Transverse colon (tissue), 4 donors: ENCODE measurements at regions of chr2 and their contacts with region 1.

Region 1: GRCh38 chr2:69436938-69437750 is at the start of gene NFU1:
- DNase-seq: peak; percentile 91
- H3K4me3 ChIP-seq: peak within 1 kb of the TSS; percentile 59 to 93 (median 73)
- H3K27ac ChIP-seq: peak within 1 kb of the TSS; percentile 92 to 98 (median 96)
- H3K4me1 ChIP-seq: peaks cover 14 to 24% (median 21%) of the 10 kb centered on the region in 4 donors
- H3K27me3 ChIP-seq: no peaks in the 10 kb centered on the region
- CTCF ChIP-seq: peak; percentile 55 to 79 (median 65)
- EP300 ChIP-seq: no peak
- POLR2A ChIP-seq: peak; percentile 83
- total RNA-seq, gene NFU1: 6.7 to 84.8 (median 45.0) TPM

Region 2: DNA sequence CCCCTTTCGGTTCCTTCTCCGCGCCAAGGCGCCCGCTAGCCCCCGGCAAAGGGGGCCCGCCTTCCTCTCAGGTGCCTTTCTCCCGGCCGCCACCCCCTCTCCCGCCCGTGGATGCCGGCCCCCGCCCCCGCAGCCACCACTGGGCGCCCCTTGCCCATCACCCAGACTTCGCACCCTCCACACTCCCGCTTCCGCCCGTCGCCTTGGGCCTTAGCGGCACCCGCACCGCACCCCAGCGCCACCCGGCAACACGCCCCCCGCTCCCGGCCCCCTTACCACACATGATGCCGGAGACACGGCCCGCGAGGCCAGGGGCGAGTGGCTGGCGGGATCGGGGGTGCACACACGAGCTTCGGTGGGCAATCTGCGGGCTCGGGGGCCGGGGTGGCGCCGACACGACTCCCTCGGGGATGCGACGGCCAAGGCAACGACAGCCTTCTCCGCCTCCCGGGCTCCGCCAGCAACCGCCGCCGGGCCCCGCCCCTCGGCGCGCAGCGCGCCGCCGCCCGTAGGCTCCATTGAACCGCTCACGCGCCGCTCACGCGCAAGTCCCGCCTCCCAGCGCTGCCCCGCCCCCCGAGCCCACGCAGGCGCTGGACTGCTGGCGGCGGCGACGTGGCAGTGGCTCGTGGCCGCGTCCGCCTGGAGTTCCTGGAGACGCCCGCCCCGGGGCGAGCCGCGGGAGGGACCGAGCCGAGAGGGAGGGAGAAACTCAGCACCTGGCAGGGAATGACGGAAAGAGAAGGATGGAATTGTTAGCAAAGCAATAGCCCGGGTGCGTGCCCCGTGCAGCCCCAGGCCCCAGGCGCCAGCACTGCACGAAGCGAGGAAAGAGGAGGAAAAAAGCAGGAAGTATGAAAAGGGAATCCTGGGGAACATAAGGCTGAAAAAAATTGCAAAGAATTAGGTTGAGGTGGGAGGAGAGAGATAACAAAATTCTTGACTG is 50.1 kb before region 1 on chr2 and contains the start of gene GFPT1:
- in situ Hi-C with region 1: no loop called
- intact Hi-C with region 1: loop called (anchors 2 kb)
- DNase-seq: peak; percentile 97
- H3K4me3 ChIP-seq: peak within 1 kb of the TSS; percentile 73 to 93 (median 90)
- H3K27ac ChIP-seq: peak within 1 kb of the TSS; percentile 90 to 96 (median 92)
- H3K4me1 ChIP-seq: peaks cover 8 to 66% (median 37%) of the 10 kb centered on the region in 4 donors
- H3K27me3 ChIP-seq: no peaks in the 10 kb centered on the region
- CTCF ChIP-seq: peak in 1 of 5 experiments; percentile 6
- EP300 ChIP-seq: no peak
- POLR2A ChIP-seq: peak; percentile 93
- total RNA-seq, gene GFPT1: 28.4 to 108 (median 46.9) TPM

Region 3: GRCh38 chr2:69643602-69644505 is 206.7 kb after region 1 on chr2 and contains the start of gene AAK1:
- in situ Hi-C with region 1: no loop called
- intact Hi-C with region 1: loop called (anchors 10 kb)
- DNase-seq: peak; percentile 93
- H3K4me3 ChIP-seq: peak within 1 kb of the TSS; percentile 92 to 98 (median 96)
- H3K27ac ChIP-seq: peak within 1 kb of the TSS; percentile 96 to 98 (median 98)
- H3K4me1 ChIP-seq: peaks cover 4 to 52% (median 35%) of the 10 kb centered on the region in 4 donors
- H3K27me3 ChIP-seq: no peaks in the 10 kb centered on the region
- CTCF ChIP-seq: peak in 1 of 5 experiments; percentile 8
- EP300 ChIP-seq: no peak
- POLR2A ChIP-seq: peak; percentile 79
- total RNA-seq, gene AAK1: 34.8 to 109 (median 70.2) TPM